ENCODE measurements at regions of chr1 and their contacts with region 1.

Region 1: GRCh38 chr1:203009185-203009584 is 2.0 kb downstream of the TMEM183A start:
- DNase-seq: no peak
- H3K4me3 ChIP-seq: no peak overlapping the region
- H3K27ac ChIP-seq: no peak overlapping the region
- H3K4me1 ChIP-seq: peaks cover 6% of the 10 kb centered on the region
- H3K27me3 ChIP-seq: no peaks in the 10 kb centered on the region
- CTCF ChIP-seq: no peak
- EP300 ChIP-seq: no peak
- POLR2A ChIP-seq: no peak

Region 2: GRCh38 chr1:203026031-203026989 is 17.1 kb after region 1 on chr1 and contains the start of gene PPFIA4:
- intact Hi-C with region 1: loop called in 1 of 4 experiments (anchors 1 kb)
- DNase-seq: peak; percentile 84 to 94 (median 89)
- H3K4me3 ChIP-seq: peak within 1 kb of the TSS; percentile 42
- H3K27ac ChIP-seq: peak within 1 kb of the TSS in 1 of 2 donors; percentile 69
- H3K4me1 ChIP-seq: peaks cover 8% of the 10 kb centered on the region
- H3K27me3 ChIP-seq: no peaks in the 10 kb centered on the region
- CTCF ChIP-seq: no peak
- EP300 ChIP-seq: no peak
- POLR2A ChIP-seq: no peak
- total RNA-seq, gene PPFIA4: 1.0 to 2.6 (median 1.6) TPM

Region 3: DNA sequence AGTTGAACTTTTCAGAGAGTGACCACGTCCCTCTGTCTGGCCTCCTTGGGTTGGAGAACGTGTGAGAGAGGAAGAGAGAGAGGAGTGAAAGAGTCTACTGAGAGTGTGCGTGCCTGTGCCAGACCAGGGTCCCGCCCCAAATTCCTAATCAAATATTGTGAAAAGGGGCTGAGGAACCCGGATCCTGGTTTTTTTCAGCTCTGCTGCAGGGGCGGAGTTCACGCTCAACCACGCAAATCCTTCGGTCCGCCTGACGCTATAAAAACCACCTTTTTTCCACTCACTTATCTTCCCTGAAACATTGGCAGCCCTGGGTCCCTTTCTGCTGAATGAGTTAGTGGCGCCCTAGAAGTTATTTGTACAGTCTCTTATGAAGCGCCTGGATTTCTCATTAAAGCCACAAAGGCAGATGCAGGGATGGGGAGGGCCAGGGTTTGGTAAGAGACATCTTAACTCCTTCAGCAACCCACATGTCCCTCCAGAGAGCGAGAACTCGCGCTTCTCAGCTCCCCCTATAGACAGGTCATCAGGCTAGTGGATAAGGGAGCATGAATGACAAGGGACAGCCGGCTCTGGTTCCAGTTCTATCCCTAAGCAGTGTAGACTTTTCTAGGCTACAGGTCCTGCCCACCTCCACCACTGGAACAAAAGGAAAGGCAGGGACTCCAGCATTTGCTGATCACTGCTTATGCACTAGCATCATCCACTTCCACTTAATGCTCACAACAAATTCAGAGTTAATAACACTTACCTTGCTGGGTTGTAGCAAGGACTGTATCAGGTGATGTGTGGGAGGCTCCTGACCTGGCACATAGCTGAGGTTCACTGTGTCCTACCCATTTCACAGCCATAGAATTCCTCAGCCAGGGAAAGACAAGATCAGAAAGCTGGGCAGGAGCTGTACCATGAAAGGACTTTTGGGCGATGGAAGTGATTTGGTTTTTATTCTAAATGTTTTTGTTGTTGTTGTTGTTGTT is 342.1 kb after region 1 on chr1 and contains the start of gene FMOD:
- intact Hi-C with region 1: no loop called
- DNase-seq: peak; percentile 78 to 89 (median 80)
- H3K4me3 ChIP-seq: peak within 1 kb of the TSS; percentile 46
- H3K27ac ChIP-seq: peak within 1 kb of the TSS; percentile 58 to 72
- H3K4me1 ChIP-seq: peaks cover 6% of the 10 kb centered on the region
- H3K27me3 ChIP-seq: no peaks in the 10 kb centered on the region
- CTCF ChIP-seq: no peak
- EP300 ChIP-seq: no peak
- POLR2A ChIP-seq: peak; percentile 36
- total RNA-seq, gene FMOD: 110 to 158 (median 137) TPM